Naive thymus-derived CD4-positive, alpha-beta T cell (primary cell): ENCODE measurements at regions of chr13 and their contacts with region 1.

Region 1: GRCh38 chr13:78658635-78659449 is at the start of gene OBI1:
- DNase-seq: peak; percentile 84 to 94 (median 90)
- ATAC-seq: peak; percentile 99
- H3K4me3 ChIP-seq: peak within 1 kb of the TSS; percentile 94
- H3K4me3 Mint-ChIP-seq: peak within 1 kb of the TSS; percentile 91 to 100 (median 98)
- H3K27ac ChIP-seq: peak within 1 kb of the TSS; percentile 71
- H3K27ac Mint-ChIP-seq: peak within 1 kb of the TSS; percentile 91 to 98 (median 95)
- H3K4me1 ChIP-seq: peaks cover 10 to 11% of the 10 kb centered on the region in 2 donors
- H3K4me1 Mint-ChIP-seq: peaks cover 22 to 55% (median 47%) of the 10 kb centered on the region in 7 donors
- H3K27me3 ChIP-seq: no peaks in the 10 kb centered on the region
- H3K27me3 Mint-ChIP-seq: no peaks in the 10 kb centered on the region
- total RNA-seq, gene OBI1: 4.2 to 17.7 (median 15.9) TPM

Region 2: GRCh38 chr13:78022164-78022877 is 636.5 kb before region 1 on chr13:
- CTCF ChIA-PET with region 1: no interaction called
- POLR2A ChIA-PET with region 1: no interaction called
- intact Hi-C with region 1: loop called in 1 of 2 experiments (anchors 5 kb)
- DNase-seq: peak in 8 of 9 donors; percentile 9 to 54 (median 34)
- ATAC-seq: peak; percentile 94
- H3K4me3 ChIP-seq: no peak overlapping the region
- H3K4me3 Mint-ChIP-seq: peak overlapping the region in 7 of 10 donors; percentile 1 to 69 (median 5)
- H3K27ac ChIP-seq: no peak overlapping the region
- H3K27ac Mint-ChIP-seq: peak overlapping the region; percentile 0 to 86 (median 35)
- H3K4me1 ChIP-seq: peaks cover 0 to 7% of the 10 kb centered on the region in 2 donors
- H3K4me1 Mint-ChIP-seq: peaks cover 6 to 16% (median 11%) of the 10 kb centered on the region in 7 donors
- H3K27me3 ChIP-seq: no peaks in the 10 kb centered on the region
- H3K27me3 Mint-ChIP-seq: peaks cover 0 to 16% (median 3%) of the 10 kb centered on the region in 5 donors

Region 3: DNA sequence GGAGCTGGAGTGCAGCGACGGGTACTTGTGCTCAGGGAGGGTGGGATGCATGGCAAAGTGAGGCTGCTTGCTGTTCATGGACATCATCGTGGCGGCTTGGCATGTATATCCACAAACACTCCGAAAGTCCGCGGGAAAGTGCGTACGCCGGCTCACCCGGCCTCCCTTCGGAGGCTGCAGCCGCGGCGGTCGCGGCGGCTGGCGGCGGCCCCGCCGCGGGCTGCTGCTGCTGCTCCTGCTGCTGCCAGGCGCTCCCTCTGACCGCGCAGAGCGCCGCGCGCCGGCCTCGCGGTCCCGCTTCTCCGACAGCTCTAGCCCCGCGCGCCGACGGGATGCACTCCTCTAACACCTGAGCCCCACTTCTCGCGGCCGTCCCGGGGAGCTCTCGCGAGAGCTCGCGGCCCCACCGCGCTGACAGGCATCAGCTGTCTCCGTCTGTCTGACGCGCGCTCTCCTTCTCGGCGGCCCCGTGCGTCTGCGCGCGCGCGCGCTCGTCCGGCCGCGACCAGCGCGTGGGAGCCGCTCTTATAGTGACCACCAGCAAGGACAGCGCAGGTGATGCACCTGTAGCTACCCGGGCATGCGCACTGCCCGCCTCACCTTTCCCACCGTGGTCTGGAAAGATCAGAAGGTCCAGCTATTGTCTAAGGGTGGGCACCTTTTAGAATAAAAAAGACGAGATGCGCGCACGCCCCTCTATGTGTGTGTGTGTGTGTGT is 55.4 kb before region 1 on chr13 and contains the start of gene POU4F1:
- CTCF ChIA-PET with region 1: no interaction called
- POLR2A ChIA-PET with region 1: no interaction called
- intact Hi-C with region 1: loop called (anchors 2 to 5 kb)
- DNase-seq: peak in 4 of 9 donors; percentile 44 to 70 (median 50)
- ATAC-seq: peak; percentile 59
- H3K4me3 ChIP-seq: peak within 1 kb of the TSS; percentile 43
- H3K4me3 Mint-ChIP-seq: peak within 1 kb of the TSS; percentile 76 to 95 (median 85)
- H3K27ac ChIP-seq: no peak within 1 kb of the TSS
- H3K27ac Mint-ChIP-seq: peak within 1 kb of the TSS in 6 of 9 donors; percentile 7 to 89 (median 68)
- H3K4me1 ChIP-seq: peaks cover 4 to 31% of the 10 kb centered on the region in 2 donors
- H3K4me1 Mint-ChIP-seq: peaks cover 35 to 70% (median 56%) of the 10 kb centered on the region in 7 donors
- H3K27me3 ChIP-seq: peaks cover 44 to 74% of the 10 kb centered on the region in 2 donors
- H3K27me3 Mint-ChIP-seq: peaks cover 82 to 91% (median 88%) of the 10 kb centered on the region in 5 donors
- total RNA-seq, gene POU4F1: 0.08 to 0.22 (median 0.15) TPM in 3 of 5 experiments, not detected in the others

Region 4: GRCh38 chr13:79194272-79194671 is 535.4 kb after region 1 on chr13:
- CTCF ChIA-PET with region 1: no interaction called
- POLR2A ChIA-PET with region 1: no interaction called
- intact Hi-C with region 1: loop called in 1 of 2 experiments (anchors 5 kb)
- DNase-seq: peak in 8 of 9 donors; percentile 14 to 59 (median 46)
- ATAC-seq: peak; percentile 89
- H3K4me3 ChIP-seq: no peak overlapping the region
- H3K4me3 Mint-ChIP-seq: peak overlapping the region in 2 of 10 donors; percentile 21 to 61
- H3K27ac ChIP-seq: no peak overlapping the region
- H3K27ac Mint-ChIP-seq: peak overlapping the region in 1 of 9 donors; percentile 24
- H3K4me1 ChIP-seq: peaks cover 9 to 11% of the 10 kb centered on the region in 2 donors
- H3K4me1 Mint-ChIP-seq: peaks cover 6 to 53% (median 21%) of the 10 kb centered on the region in 7 donors
- H3K27me3 ChIP-seq: no peaks in the 10 kb centered on the region
- H3K27me3 Mint-ChIP-seq: peaks cover 0 to 21% (median 0%) of the 10 kb centered on the region in 5 donors

Region 5: GRCh38 chr13:79405829-79406596 is 747.2 kb after region 1 on chr13 and contains the start of gene RBM26:
- CTCF ChIA-PET with region 1: no interaction called
- POLR2A ChIA-PET with region 1: no interaction called
- intact Hi-C with region 1: loop called (anchors 2 to 5 kb)
- DNase-seq: peak; percentile 87 to 96 (median 93)
- ATAC-seq: peak; percentile 92
- H3K4me3 ChIP-seq: peak within 1 kb of the TSS; percentile 93
- H3K4me3 Mint-ChIP-seq: peak within 1 kb of the TSS in 5 of 10 donors; percentile 93 to 97 (median 95)
- H3K27ac ChIP-seq: peak within 1 kb of the TSS; percentile 91
- H3K27ac Mint-ChIP-seq: peak within 1 kb of the TSS in 5 of 9 donors; percentile 97 to 99 (median 99)
- H3K4me1 ChIP-seq: peaks cover 33 to 44% of the 10 kb centered on the region in 2 donors
- H3K4me1 Mint-ChIP-seq: peaks cover 31 to 49% (median 36%) of the 10 kb centered on the region in 7 donors
- H3K27me3 ChIP-seq: no peaks in the 10 kb centered on the region
- H3K27me3 Mint-ChIP-seq: no peaks in the 10 kb centered on the region
- total RNA-seq, gene RBM26: 75.4 to 136 (median 85.2) TPM